Dendritic cell treated with granulocyte-macrophage colony-stimulating factor and Interleukin-4, amounts not matched to agents 40 ng/mL and 50 ng/mL, for 4 days (primary cell): ENCODE measurements at regions of chr3 and their contacts with region 1.

Region 1: DNA sequence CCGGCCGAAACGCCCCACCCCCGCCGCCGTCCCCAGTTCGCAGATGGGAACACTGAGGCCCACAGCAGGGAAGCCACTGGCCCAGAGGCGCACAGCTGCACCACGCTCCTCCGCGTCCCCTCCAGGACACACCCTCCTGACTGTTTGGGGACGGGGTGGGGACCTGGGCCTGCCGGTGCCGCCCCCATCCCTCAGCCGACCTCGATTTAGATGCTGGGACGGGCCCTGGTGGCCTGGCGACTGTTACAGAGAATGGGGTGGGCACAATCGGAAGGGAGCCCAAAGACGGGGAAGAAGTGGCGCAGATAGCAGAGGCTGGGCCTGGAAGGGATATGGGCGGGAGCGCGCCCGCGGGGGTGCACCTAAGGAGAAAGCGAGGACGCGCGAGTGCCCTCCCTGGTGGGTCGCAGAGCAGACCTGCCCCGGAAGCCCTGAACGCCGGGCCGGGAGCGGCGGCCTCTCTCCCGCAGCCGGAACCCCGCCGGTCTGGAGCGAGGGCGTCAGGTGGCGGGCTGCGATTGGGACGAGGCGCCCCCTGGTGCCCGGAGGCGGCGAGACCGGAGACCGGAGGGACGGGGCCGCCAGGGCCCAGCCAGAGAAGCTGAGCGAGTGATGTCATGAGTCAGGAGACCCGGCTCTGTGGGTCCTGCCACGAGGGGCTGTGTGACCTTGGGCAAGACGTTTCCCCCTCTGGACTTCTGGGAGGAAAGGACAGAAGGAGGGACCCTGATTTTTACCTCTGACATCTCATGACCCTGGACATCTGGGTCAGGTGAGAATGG is 78.4 kb downstream of the IQSEC1 start:
- H3K4me3 Mint-ChIP-seq: peak overlapping the region; percentile 90
- H3K27ac Mint-ChIP-seq: peak overlapping the region; percentile 82
- H3K4me1 Mint-ChIP-seq: peaks cover 80% of the 10 kb centered on the region
- H3K27me3 Mint-ChIP-seq: no peaks in the 10 kb centered on the region

Region 2: GRCh38 chr3:12750223-12750622 is 244.6 kb before region 1 on chr3:
- intact Hi-C with region 1: no loop called
- H3K4me3 Mint-ChIP-seq: no peak overlapping the region
- H3K27ac Mint-ChIP-seq: no peak overlapping the region
- H3K4me1 Mint-ChIP-seq: peaks cover 7% of the 10 kb centered on the region
- H3K27me3 Mint-ChIP-seq: peaks cover 26% of the 10 kb centered on the region

Region 3: GRCh38 chr3:12954891-12955650 is 39.7 kb before region 1 on chr3:
- intact Hi-C with region 1: loop called (anchors 5 kb)
- H3K4me3 Mint-ChIP-seq: peak overlapping the region; percentile 26
- H3K27ac Mint-ChIP-seq: peak overlapping the region; percentile 87
- H3K4me1 Mint-ChIP-seq: peaks cover 89% of the 10 kb centered on the region
- H3K27me3 Mint-ChIP-seq: no peaks in the 10 kb centered on the region

Region 4: GRCh38 chr3:12984023-12984823 is 10.6 kb before region 1 on chr3:
- intact Hi-C with region 1: loop called (anchors 1 kb)
- H3K4me3 Mint-ChIP-seq: no peak overlapping the region
- H3K27ac Mint-ChIP-seq: no peak overlapping the region
- H3K4me1 Mint-ChIP-seq: peaks cover 54% of the 10 kb centered on the region
- H3K27me3 Mint-ChIP-seq: no peaks in the 10 kb centered on the region

Region 5: DNA sequence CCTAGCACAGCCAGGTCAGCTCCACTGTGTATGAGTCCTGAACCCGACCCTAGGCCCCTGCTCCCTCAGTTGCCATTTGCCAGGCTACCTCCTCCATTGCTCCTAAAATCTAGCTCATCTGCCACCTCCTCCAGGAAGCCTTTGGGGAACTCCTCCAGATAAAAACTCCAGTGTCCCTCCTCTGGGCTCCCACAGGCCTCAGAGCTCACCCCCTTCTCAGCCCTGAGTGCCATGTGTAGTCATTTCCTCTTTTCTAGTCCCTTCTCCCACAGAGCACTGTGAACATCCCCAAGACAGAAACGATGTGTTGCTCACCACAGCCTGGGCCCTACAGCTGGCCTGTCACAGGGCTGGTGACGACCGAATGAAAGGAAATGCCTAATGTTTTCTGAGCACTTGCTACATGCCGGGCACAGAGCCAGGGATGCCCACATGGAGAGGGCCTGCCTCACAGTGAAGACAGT is 17.5 kb after region 1 on chr3:
- intact Hi-C with region 1: loop called (anchors 1 kb)
- H3K4me3 Mint-ChIP-seq: peak overlapping the region; percentile 73
- H3K27ac Mint-ChIP-seq: peak overlapping the region; percentile 96
- H3K4me1 Mint-ChIP-seq: peaks cover 95% of the 10 kb centered on the region
- H3K27me3 Mint-ChIP-seq: no peaks in the 10 kb centered on the region